Left cardiac atrium (tissue), 4 donors: ENCODE measurements at regions of chr10 and their contacts with region 1.

Region 1: GRCh38 chr10:102476466-102477141 is 25.3 kb upstream of the C10orf95 start:
- DNase-seq: no peak
- ATAC-seq: no peak

Region 2: GRCh38 chr10:102384053-102384452 is 92.6 kb before region 1 on chr10:
- intact Hi-C with region 1: loop called in 1 of 2 experiments (anchors 10 kb)
- DNase-seq: no peak
- ATAC-seq: no peak

Region 3: GRCh38 chr10:102394079-102394800 is 82.4 kb before region 1 on chr10:
- intact Hi-C with region 1: loop called (anchors 5 to 10 kb)
- DNase-seq: peak; percentile 97
- ATAC-seq: peak; percentile 91